CD8-positive, alpha-beta T cell (primary cell): ENCODE measurements at regions of chr1 and their contacts with region 1.

Region 1: GRCh38 chr1:7042322-7043190 is 257.3 kb downstream of the CAMTA1 start:
- DNase-seq: peak in 1 of 9 experiments; percentile 27
- ATAC-seq: no peak
- H3K4me3 ChIP-seq: no peak overlapping the region
- H3K4me3 Mint-ChIP-seq: no peak overlapping the region
- H3K27ac ChIP-seq: no peak overlapping the region
- H3K27ac Mint-ChIP-seq: no peak overlapping the region
- H3K4me1 ChIP-seq: no peaks in the 10 kb centered on the region
- H3K4me1 Mint-ChIP-seq: no peaks in the 10 kb centered on the region
- H3K27me3 ChIP-seq: no peaks in the 10 kb centered on the region
- H3K27me3 Mint-ChIP-seq: peaks cover 6% of the 10 kb centered on the region
- CTCF ChIP-seq: peak; percentile 25

Region 2: DNA sequence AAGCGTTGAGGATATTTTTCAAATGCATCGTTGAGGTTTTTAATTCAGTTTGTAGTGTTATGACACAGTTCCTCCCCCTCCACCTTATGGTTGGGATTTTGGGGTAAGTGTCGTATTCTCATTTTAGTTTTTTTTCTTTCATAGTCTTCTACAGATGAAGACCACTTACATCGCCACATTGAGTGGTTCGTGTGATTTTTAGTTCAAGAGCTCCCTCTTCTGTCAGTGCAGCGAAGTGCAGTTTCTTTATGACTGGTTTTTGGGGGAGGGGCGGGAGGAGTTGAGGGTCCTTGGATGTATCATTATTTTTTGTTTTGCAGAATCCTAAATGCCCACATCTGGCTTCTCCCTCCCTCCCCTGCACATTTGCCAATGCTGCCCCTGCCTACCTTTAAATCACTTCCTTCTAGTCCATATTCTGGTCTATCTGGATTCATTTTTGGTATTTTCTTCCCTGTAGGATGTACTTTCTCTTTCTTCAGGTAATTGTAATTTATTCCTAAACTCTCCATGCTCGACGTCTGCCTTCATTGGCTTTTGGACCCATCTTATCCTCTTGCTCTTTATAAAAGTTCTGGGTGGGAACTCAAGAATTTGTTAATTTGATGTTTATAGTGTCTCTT is 175.8 kb after region 1 on chr1:
- CTCF ChIA-PET with region 1: no interaction called
- POLR2A ChIA-PET with region 1: no interaction called
- intact Hi-C with region 1: loop called in 1 of 2 experiments (anchors 5 kb)
- DNase-seq: peak in 4 of 9 experiments; percentile 15 to 46 (median 36)
- ATAC-seq: no peak
- H3K4me3 ChIP-seq: no peak overlapping the region
- H3K4me3 Mint-ChIP-seq: no peak overlapping the region
- H3K27ac ChIP-seq: no peak overlapping the region
- H3K27ac Mint-ChIP-seq: no peak overlapping the region
- H3K4me1 ChIP-seq: no peaks in the 10 kb centered on the region
- H3K4me1 Mint-ChIP-seq: no peaks in the 10 kb centered on the region
- H3K27me3 ChIP-seq: peaks cover 0 to 2% of the 10 kb centered on the region in 2 experiments
- H3K27me3 Mint-ChIP-seq: peaks cover 28% of the 10 kb centered on the region
- CTCF ChIP-seq: no peak